ENCODE measurements at regions of chr1 and their contacts with region 1.

Region 1: DNA sequence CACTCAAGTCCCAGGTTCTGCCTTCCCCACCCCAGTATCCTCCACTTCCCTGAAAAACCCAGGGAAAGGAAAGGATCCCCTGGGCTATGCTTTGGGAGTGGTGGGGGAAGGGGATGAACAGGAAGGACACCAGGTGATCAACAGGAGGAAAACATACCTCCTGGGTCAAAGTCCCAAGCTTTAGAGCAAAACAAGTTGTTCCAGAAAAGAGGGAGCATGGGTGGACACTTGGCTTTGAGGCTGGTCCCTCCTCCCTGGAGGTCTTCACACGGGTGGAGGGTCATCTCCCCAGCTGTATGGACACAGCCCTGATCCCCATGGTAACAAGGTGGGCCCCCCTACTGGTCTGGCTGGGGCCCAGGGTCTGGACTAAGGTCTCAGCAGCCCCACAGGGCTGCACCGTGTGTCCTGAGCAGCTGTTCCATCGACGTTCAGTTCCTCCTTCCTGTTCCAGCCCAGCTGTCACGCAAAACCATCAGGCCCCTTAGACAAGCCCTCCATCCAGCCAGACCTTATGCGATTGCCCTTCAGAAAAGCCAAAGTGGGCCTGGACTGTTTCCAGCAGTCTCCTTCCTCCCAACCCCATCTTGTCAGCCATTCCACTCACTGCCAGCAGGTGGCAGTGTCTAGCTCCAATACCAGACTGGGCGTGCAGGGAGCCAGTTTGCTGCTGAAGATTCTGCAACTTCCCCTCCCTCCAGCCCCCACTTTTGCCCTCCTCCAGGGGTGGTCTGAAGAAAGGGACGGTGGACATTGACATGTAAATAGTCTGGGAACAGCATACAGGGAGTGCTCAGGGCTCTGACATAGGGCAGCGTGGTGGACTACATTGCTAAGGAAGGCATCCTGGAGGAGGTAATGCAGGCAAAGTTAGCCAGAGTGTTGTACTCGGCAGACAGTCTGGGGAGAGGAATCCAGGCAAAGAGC is 2.9 kb upstream of the PDZK1IP1 start:
- DNase-seq: peak; percentile 50 to 61
- ATAC-seq: peak; percentile 10 to 23
- H3K4me3 ChIP-seq: no peak overlapping the region
- H3K27ac ChIP-seq: no peak overlapping the region
- H3K4me1 ChIP-seq: peaks cover 7 to 14% of the 10 kb centered on the region in 2 donors
- H3K27me3 ChIP-seq: no peaks in the 10 kb centered on the region
- CTCF ChIP-seq: peak; percentile 80 to 97 (median 86)
- POLR2A ChIP-seq: no peak

Region 2: GRCh38 chr1:46757241-46757959 is 435.3 kb before region 1 on chr1:
- in situ Hi-C with region 1: no loop called
- intact Hi-C with region 1: no loop called
- DNase-seq: no peak
- ATAC-seq: no peak
- H3K4me3 ChIP-seq: no peak overlapping the region
- H3K27ac ChIP-seq: no peak overlapping the region
- H3K4me1 ChIP-seq: no peaks in the 10 kb centered on the region
- H3K27me3 ChIP-seq: no peaks in the 10 kb centered on the region
- CTCF ChIP-seq: no peak
- POLR2A ChIP-seq: no peak

Region 3: GRCh38 chr1:47031108-47031457 is 161.6 kb before region 1 on chr1:
- in situ Hi-C with region 1: no loop called
- intact Hi-C with region 1: no loop called
- DNase-seq: peak in 1 of 2 donors; percentile 17
- ATAC-seq: peak in 1 of 2 donors; percentile 58
- H3K4me3 ChIP-seq: no peak overlapping the region
- H3K27ac ChIP-seq: peak overlapping the region in 3 of 4 donors; percentile 17 to 31 (median 27)
- H3K4me1 ChIP-seq: peaks cover 16 to 29% of the 10 kb centered on the region in 2 donors
- H3K27me3 ChIP-seq: no peaks in the 10 kb centered on the region
- CTCF ChIP-seq: no peak
- POLR2A ChIP-seq: no peak

Region 4: GRCh38 chr1:47257224-47257623 is 64.5 kb after region 1 on chr1:
- in situ Hi-C with region 1: loop called in 3 of 4 experiments (anchors 10 kb)
- intact Hi-C with region 1: loop called (anchors 5 kb)
- DNase-seq: no peak
- ATAC-seq: peak in 1 of 2 donors; percentile 92
- H3K4me3 ChIP-seq: no peak overlapping the region
- H3K27ac ChIP-seq: no peak overlapping the region
- H3K4me1 ChIP-seq: peaks cover 0 to 3% of the 10 kb centered on the region in 2 donors
- H3K27me3 ChIP-seq: no peaks in the 10 kb centered on the region
- CTCF ChIP-seq: no peak
- POLR2A ChIP-seq: no peak

Region 5: GRCh38 chr1:47262787-47263413 is 70.2 kb after region 1 on chr1:
- in situ Hi-C with region 1: loop called in 3 of 4 experiments (anchors 10 kb)
- intact Hi-C with region 1: loop called (anchors 5 kb)
- DNase-seq: peak; percentile 12 to 66
- ATAC-seq: peak; percentile 72
- H3K4me3 ChIP-seq: no peak overlapping the region
- H3K27ac ChIP-seq: peak overlapping the region in 2 of 4 donors; percentile 43 to 70
- H3K4me1 ChIP-seq: peaks cover 0 to 22% of the 10 kb centered on the region in 2 donors
- H3K27me3 ChIP-seq: no peaks in the 10 kb centered on the region
- CTCF ChIP-seq: peak; percentile 29 to 75 (median 53)
- POLR2A ChIP-seq: no peak

Region 6: GRCh38 chr1:47333922-47334764 is 141.4 kb after region 1 on chr1:
- in situ Hi-C with region 1: loop called in 2 of 4 experiments (anchors 25 kb)
- intact Hi-C with region 1: loop called (anchors 1 kb)
- DNase-seq: peak; percentile 65 to 83
- ATAC-seq: peak; percentile 90 to 92
- H3K4me3 ChIP-seq: peak overlapping the region; percentile 72 to 99 (median 92)
- H3K27ac ChIP-seq: peak overlapping the region; percentile 93 to 100 (median 98)
- H3K4me1 ChIP-seq: peaks cover 28 to 39% of the 10 kb centered on the region in 2 donors
- H3K27me3 ChIP-seq: no peaks in the 10 kb centered on the region
- CTCF ChIP-seq: peak in 2 of 5 experiments; percentile 40 to 46
- POLR2A ChIP-seq: peak; percentile 73 to 76

Region 7: GRCh38 chr1:47424336-47424982 is 231.7 kb after region 1 on chr1:
- in situ Hi-C with region 1: loop called (anchors 5 to 25 kb)
- intact Hi-C with region 1: loop called (anchors 5 kb)
- DNase-seq: no peak
- ATAC-seq: no peak
- H3K4me3 ChIP-seq: no peak overlapping the region
- H3K27ac ChIP-seq: no peak overlapping the region
- H3K4me1 ChIP-seq: no peaks in the 10 kb centered on the region
- H3K27me3 ChIP-seq: peaks cover 0 to 11% (median 11%) of the 10 kb centered on the region in 3 donors
- CTCF ChIP-seq: peak; percentile 21 to 60 (median 40)
- POLR2A ChIP-seq: no peak